GM10248 (cell line): ENCODE measurements at regions of chr1 and their contacts with region 1.

Region 1: GRCh38 chr1:153272586-153272985 is 13.1 kb downstream of the LORICRIN start:
- DNase-seq: no peak
- CTCF ChIP-seq: no peak

Region 2: DNA sequence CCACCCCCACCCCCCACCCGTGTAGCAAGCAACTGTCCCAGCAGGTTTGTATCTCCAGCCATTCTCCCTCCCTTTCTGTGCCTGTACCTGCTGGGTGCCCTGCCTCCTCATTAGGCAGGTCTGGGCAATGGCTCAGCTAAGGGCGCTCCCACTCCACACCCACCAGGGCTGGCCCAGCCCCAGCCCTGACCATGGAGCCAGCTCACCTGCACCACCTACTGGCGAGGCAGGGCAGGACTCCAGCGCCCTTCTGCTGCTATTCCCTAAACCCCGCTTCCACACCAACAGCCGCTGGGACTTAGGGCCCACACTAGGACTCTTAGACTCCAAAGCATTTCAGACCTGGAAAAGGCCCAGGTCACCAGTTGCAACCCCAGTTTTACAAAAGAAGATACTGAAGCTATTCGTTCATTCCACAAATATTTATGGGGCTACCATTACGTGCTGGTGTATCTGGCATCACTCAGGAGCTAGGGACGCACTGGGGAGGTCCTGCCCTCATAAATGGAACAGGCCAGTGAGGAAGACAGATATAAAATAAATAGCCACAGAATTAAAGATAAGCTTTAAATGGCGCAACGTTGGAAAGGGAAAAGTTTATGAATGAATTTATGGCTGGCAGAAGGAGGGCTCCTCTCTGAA is 16.2 kb after region 1 on chr1:
- CTCF ChIA-PET with region 1: interaction called, 14 read pairs
- POLR2A ChIA-PET with region 1: no interaction called
- DNase-seq: peak; percentile 65
- CTCF ChIP-seq: peak; percentile 70